ENCODE measurements at regions of chr7 and their contacts with region 1.

Region 1: GRCh38 chr7:131625817-131626372 is 69.5 kb upstream of the PODXL start:
- DNase-seq: peak; percentile 95 to 97
- H3K4me3 ChIP-seq: no peak overlapping the region
- H3K4me3 Mint-ChIP-seq: peak overlapping the region; percentile 20
- H3K27ac Mint-ChIP-seq: peak overlapping the region; percentile 86
- H3K4me1 ChIP-seq: peaks cover 91% of the 10 kb centered on the region
- H3K4me1 Mint-ChIP-seq: peaks cover 64% of the 10 kb centered on the region
- H3K27me3 ChIP-seq: no peaks in the 10 kb centered on the region
- H3K27me3 Mint-ChIP-seq: no peaks in the 10 kb centered on the region
- CTCF ChIP-seq: peak; percentile 18 to 35

Region 2: GRCh38 chr7:131556052-131556908 is 69.6 kb before region 1 on chr7 and contains the start of gene PODXL:
- CTCF ChIA-PET with region 1: interaction called, 10 read pairs
- POLR2A ChIA-PET with region 1: no interaction called
- intact Hi-C with region 1: loop called (anchors 1 kb)
- DNase-seq: peak; percentile 73 to 83
- H3K4me3 ChIP-seq: peak within 1 kb of the TSS; percentile 91
- H3K4me3 Mint-ChIP-seq: peak within 1 kb of the TSS; percentile 94
- H3K27ac Mint-ChIP-seq: peak within 1 kb of the TSS; percentile 67
- H3K4me1 ChIP-seq: peaks cover 31% of the 10 kb centered on the region
- H3K4me1 Mint-ChIP-seq: peaks cover 34% of the 10 kb centered on the region
- H3K27me3 ChIP-seq: no peaks in the 10 kb centered on the region
- H3K27me3 Mint-ChIP-seq: no peaks in the 10 kb centered on the region
- CTCF ChIP-seq: no peak
- total RNA-seq, gene PODXL: 243 and 278 TPM in 2 replicates

Region 3: DNA sequence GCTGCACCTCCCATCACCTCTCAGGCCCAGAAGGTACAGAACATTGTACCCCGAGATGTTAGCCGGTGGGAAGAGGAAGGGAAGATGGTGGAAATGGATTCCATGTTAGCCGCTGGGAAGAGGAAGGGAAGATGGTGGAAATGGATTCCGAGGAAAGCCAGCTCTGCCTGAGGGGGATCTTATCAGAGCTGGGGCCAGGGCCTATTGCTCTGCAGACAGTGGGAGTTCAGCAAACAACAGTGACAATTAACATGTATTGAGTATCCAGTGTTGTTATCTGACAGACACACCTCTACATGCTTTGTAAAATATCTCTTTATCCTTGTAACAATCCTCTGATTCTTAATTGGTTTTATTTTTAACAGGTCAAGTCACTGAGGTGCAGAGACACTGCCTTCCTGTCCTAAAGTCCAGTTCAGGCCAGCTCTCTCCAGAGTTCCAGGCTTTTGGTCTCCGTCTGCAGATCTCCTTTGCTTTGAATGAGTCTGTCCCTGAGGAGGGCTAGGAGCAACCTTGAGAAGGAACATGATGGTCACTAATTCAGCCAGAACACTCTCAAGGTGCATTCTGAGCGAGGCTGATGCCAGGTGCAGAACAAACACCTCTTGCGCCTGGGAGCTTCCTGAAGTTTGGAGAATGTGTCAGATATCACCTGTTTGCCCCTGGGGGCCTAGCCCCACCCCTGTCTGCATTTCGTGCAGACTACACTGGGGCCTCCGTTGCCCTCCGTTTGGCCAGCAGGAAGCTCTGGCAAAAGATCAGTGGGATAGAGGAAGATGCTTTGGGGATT is 12.9 kb after region 1 on chr7:
- CTCF ChIA-PET with region 1: interaction called, 11 read pairs
- POLR2A ChIA-PET with region 1: interaction called, 12 read pairs
- intact Hi-C with region 1: loop called (anchors 1 kb)
- DNase-seq: peak; percentile 75 to 84
- H3K4me3 ChIP-seq: no peak overlapping the region
- H3K4me3 Mint-ChIP-seq: peak overlapping the region; percentile 17
- H3K27ac Mint-ChIP-seq: peak overlapping the region; percentile 73
- H3K4me1 ChIP-seq: peaks cover 72% of the 10 kb centered on the region
- H3K4me1 Mint-ChIP-seq: peaks cover 64% of the 10 kb centered on the region
- H3K27me3 ChIP-seq: no peaks in the 10 kb centered on the region
- H3K27me3 Mint-ChIP-seq: no peaks in the 10 kb centered on the region
- CTCF ChIP-seq: no peak

Region 4: GRCh38 chr7:131674131-131674530 is 48.2 kb after region 1 on chr7:
- CTCF ChIA-PET with region 1: no interaction called
- POLR2A ChIA-PET with region 1: no interaction called
- intact Hi-C with region 1: no loop called
- DNase-seq: no peak
- H3K4me3 ChIP-seq: no peak overlapping the region
- H3K4me3 Mint-ChIP-seq: no peak overlapping the region
- H3K27ac Mint-ChIP-seq: no peak overlapping the region
- H3K4me1 ChIP-seq: no peaks in the 10 kb centered on the region
- H3K4me1 Mint-ChIP-seq: no peaks in the 10 kb centered on the region
- H3K27me3 ChIP-seq: no peaks in the 10 kb centered on the region
- H3K27me3 Mint-ChIP-seq: no peaks in the 10 kb centered on the region
- CTCF ChIP-seq: no peak

Measured in Caco-2 (cell line).